Vagina (tissue), 2 donors: ENCODE measurements at regions of chr21 and their contacts with region 1.

Region 1: DNA sequence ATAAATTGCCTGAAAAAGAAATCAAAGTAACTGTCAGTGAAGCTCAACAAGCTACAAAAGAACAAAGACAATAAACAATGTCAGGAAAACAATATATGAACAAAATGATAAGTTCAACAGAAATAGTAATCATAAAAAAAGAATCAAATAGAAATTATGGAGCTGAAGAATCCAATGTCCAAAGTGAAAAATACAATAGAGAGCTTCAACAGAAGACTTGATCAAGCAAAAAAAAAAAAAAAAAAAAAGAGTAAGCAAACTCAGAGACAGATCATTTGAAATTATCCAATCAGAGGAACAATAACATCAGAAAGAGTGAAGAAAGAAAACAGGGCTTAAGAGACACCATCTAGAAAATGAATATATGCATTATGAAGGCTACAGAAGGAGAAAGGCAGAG is 251.4 kb upstream of the SAMSN1 start:
- DNase-seq: no peak
- H3K4me3 ChIP-seq: no peak overlapping the region
- H3K27ac ChIP-seq: no peak overlapping the region
- H3K4me1 ChIP-seq: no peaks in the 10 kb centered on the region
- H3K27me3 ChIP-seq: no peaks in the 10 kb centered on the region
- CTCF ChIP-seq: no peak
- POLR2A ChIP-seq: no peak

Region 2: DNA sequence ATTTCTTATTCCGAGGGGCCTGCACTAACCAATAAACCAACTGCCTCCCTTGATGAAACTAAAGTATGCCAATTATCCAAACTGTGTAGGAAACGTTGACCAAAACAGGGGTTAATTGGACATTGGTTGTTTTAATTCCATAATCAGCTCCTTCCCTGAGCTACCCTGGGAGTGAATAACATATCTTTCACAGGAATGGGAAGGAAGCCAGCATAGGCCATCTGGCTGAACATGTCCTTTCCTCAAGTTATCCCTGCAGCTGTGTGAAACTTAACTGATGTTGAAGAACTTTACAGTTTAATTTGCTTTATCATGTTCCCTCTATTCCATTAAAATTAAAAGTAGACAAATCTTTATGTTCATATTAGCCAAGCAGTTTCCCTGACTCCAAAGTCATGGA is 191.8 kb after region 1 on chr21:
- intact Hi-C with region 1: loop called (anchors 5 kb)
- DNase-seq: no peak
- H3K4me3 ChIP-seq: no peak overlapping the region
- H3K27ac ChIP-seq: no peak overlapping the region
- H3K4me1 ChIP-seq: peaks cover 30% of the 10 kb centered on the region
- H3K27me3 ChIP-seq: no peaks in the 10 kb centered on the region
- CTCF ChIP-seq: no peak
- POLR2A ChIP-seq: no peak